Ovary (tissue), 10 donors: ENCODE measurements at regions of chr6 and their contacts with region 1.

Region 1: GRCh38 chr6:25717866-25718740 is 36.4 kb upstream of the SLC17A4 start:
- DNase-seq: no peak
- H3K4me3 ChIP-seq: no peak overlapping the region
- H3K27ac ChIP-seq: no peak overlapping the region
- H3K4me1 ChIP-seq: no peaks in the 10 kb centered on the region
- H3K27me3 ChIP-seq: no peaks in the 10 kb centered on the region
- CTCF ChIP-seq: peak in 2 of 3 donors; percentile 38 to 40
- EP300 ChIP-seq: no peak
- POLR2A ChIP-seq: no peak

Region 2: GRCh38 chr6:25223490-25223991 is 494.6 kb before region 1 on chr6:
- intact Hi-C with region 1: loop called in 1 of 4 experiments (anchors 10 kb)
- DNase-seq: peak; percentile 64 to 79 (median 76)
- H3K4me3 ChIP-seq: peak overlapping the region; percentile 12
- H3K27ac ChIP-seq: peak overlapping the region in 1 of 2 donors; percentile 58
- H3K4me1 ChIP-seq: no peaks in the 10 kb centered on the region
- H3K27me3 ChIP-seq: no peaks in the 10 kb centered on the region
- CTCF ChIP-seq: peak; percentile 80 to 92 (median 90)
- EP300 ChIP-seq: no peak
- POLR2A ChIP-seq: no peak

Region 3: DNA sequence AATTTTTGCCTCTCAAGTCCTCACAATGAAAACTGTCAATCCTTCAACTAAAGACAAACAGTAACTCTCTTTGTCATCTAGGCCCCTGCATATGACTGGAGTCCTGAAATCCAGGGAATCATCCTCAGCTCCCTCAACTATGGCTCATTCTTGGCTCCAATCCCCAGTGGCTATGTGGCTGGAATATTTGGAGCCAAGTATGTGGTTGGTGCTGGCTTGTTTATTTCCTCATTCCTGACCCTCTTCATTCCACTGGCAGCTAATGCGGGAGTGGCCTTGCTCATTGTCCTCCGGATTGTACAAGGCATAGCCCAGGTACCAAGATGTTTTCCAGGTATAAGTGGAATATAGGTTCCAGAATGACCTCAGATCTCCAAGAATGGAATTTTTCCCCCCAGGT is 51.9 kb after region 1 on chr6:
- intact Hi-C with region 1: no loop called
- DNase-seq: no peak
- H3K4me3 ChIP-seq: no peak overlapping the region
- H3K27ac ChIP-seq: no peak overlapping the region
- H3K4me1 ChIP-seq: no peaks in the 10 kb centered on the region
- H3K27me3 ChIP-seq: no peaks in the 10 kb centered on the region
- CTCF ChIP-seq: no peak
- EP300 ChIP-seq: no peak
- POLR2A ChIP-seq: no peak